CD14-positive monocyte (primary cell): ENCODE measurements at regions of chr9 and their contacts with region 1.

Region 1: DNA sequence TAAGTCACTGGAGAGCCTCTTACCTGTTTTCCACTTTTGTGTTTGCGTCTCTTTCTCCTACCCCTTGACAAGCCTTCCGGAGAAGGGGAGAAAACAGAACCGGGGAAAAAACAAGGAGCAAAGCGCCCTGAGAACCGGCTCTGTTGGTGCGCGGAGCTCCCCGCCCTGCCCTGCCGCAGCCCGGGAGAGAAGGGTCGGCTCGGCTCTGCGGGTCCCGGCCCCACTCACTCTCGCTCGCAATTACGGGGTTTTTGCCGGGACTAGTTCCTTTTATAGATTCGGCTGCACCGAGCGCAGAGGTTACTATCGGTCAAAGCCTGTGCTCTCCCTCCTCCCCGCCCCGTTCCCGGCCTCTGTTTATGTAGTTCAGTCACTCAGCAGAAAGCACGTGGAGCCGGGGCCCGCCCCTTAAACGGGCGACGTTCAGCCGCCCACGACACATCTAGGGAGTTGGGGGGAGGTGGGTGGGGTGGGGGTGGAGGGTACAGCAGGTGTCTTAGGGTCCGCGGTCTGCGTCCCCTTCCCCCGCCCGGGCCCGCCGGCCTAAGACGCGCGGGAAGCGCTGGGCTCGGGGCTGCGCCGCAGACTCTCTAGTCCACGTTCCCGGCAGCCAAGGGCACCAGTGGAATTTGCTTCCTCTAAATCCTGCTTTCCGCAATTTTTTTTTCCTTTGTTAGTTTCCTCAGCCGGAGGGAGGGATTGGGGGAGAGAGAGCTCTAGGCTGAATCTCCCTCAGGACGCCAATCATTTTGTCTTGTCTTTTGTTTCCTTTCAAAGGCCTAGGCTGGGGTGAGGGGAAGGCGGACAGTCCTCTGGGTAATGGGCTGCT is at the start of gene ABCA1:
- DNase-seq: peak; percentile 88 to 95 (median 92)
- H3K4me3 ChIP-seq: peak within 1 kb of the TSS; percentile 66 to 100 (median 77)
- H3K4me3 Mint-ChIP-seq: peak within 1 kb of the TSS; percentile 99 to 100
- H3K27ac ChIP-seq: peak within 1 kb of the TSS; percentile 71 to 85
- H3K27ac Mint-ChIP-seq: peak within 1 kb of the TSS; percentile 88 to 97 (median 94)
- H3K4me1 ChIP-seq: peaks cover 19 to 30% of the 10 kb centered on the region in 2 donors
- H3K4me1 Mint-ChIP-seq: peaks cover 26% of the 10 kb centered on the region
- H3K27me3 ChIP-seq: no peaks in the 10 kb centered on the region
- H3K27me3 Mint-ChIP-seq: peaks cover 2 to 10% (median 4%) of the 10 kb centered on the region in 3 donors
- CTCF ChIP-seq: no peak
- polyA plus RNA-seq, gene ABCA1: 2.0 to 5.1 (median 2.7) TPM

Region 2: GRCh38 chr9:104863180-104863883 is 64.8 kb before region 1 on chr9:
- intact Hi-C with region 1: loop called (anchors 5 kb)
- DNase-seq: peak; percentile 61 to 71 (median 69)
- H3K4me3 ChIP-seq: no peak overlapping the region
- H3K4me3 Mint-ChIP-seq: no peak overlapping the region
- H3K27ac ChIP-seq: peak overlapping the region in 1 of 2 donors; percentile 24
- H3K27ac Mint-ChIP-seq: peak overlapping the region in 6 of 7 donors; percentile 38 to 76 (median 56)
- H3K4me1 ChIP-seq: peaks cover 51 to 74% of the 10 kb centered on the region in 2 donors
- H3K4me1 Mint-ChIP-seq: peaks cover 69% of the 10 kb centered on the region
- H3K27me3 ChIP-seq: no peaks in the 10 kb centered on the region
- H3K27me3 Mint-ChIP-seq: no peaks in the 10 kb centered on the region
- CTCF ChIP-seq: peak; percentile 81

Region 3: GRCh38 chr9:104991144-104991953 is 63.2 kb after region 1 on chr9:
- intact Hi-C with region 1: loop called in 1 of 2 experiments (anchors 2 kb)
- DNase-seq: peak; percentile 86 to 91 (median 89)
- H3K4me3 ChIP-seq: peak overlapping the region; percentile 46 to 81 (median 57)
- H3K4me3 Mint-ChIP-seq: peak overlapping the region; percentile 93 to 96
- H3K27ac ChIP-seq: peak overlapping the region; percentile 97
- H3K27ac Mint-ChIP-seq: peak overlapping the region; percentile 97 to 99 (median 98)
- H3K4me1 ChIP-seq: peaks cover 43 to 51% of the 10 kb centered on the region in 2 donors
- H3K4me1 Mint-ChIP-seq: peaks cover 46% of the 10 kb centered on the region
- H3K27me3 ChIP-seq: no peaks in the 10 kb centered on the region
- H3K27me3 Mint-ChIP-seq: peaks cover 0 to 9% (median 3%) of the 10 kb centered on the region in 3 donors
- CTCF ChIP-seq: no peak

Region 4: DNA sequence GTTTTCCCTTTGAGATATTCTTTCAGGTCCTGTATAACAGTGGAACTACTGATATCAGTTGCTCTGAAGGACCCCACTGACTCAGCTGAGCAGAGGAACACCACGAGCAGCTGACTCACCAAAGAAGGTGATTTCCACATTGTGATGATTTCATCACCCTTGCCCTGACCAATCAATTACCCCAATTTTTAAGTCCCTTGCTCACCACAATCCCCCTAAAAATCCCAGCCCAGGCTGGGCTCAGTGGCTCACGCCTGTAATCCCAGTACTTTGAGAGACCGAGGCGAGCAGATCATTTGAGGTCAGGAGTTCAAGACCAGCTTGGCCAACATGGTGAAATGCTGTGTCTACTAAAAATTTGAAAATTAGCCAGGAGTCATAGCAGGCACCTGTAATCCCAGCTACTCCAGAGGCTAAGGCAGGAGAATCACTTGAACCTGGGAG is 125.1 kb after region 1 on chr9:
- intact Hi-C with region 1: loop called in 1 of 2 experiments (anchors 5 kb)
- DNase-seq: peak; percentile 97 to 99 (median 99)
- H3K4me3 ChIP-seq: no peak overlapping the region
- H3K4me3 Mint-ChIP-seq: peak overlapping the region in 1 of 2 donors; percentile 77
- H3K27ac ChIP-seq: peak overlapping the region; percentile 90 to 99
- H3K27ac Mint-ChIP-seq: peak overlapping the region; percentile 93 to 99 (median 97)
- H3K4me1 ChIP-seq: peaks cover 32 to 34% of the 10 kb centered on the region in 2 donors
- H3K4me1 Mint-ChIP-seq: peaks cover 37% of the 10 kb centered on the region
- H3K27me3 ChIP-seq: no peaks in the 10 kb centered on the region
- H3K27me3 Mint-ChIP-seq: peaks cover 0 to 7% (median 0%) of the 10 kb centered on the region in 3 donors
- CTCF ChIP-seq: no peak

Region 5: GRCh38 chr9:105157130-105157583 is 229.0 kb after region 1 on chr9:
- intact Hi-C with region 1: loop called (anchors 2 to 5 kb)
- DNase-seq: peak; percentile 71 to 89 (median 82)
- H3K4me3 ChIP-seq: no peak overlapping the region
- H3K4me3 Mint-ChIP-seq: no peak overlapping the region
- H3K27ac ChIP-seq: no peak overlapping the region
- H3K27ac Mint-ChIP-seq: peak overlapping the region in 6 of 7 donors; percentile 11 to 83 (median 48)
- H3K4me1 ChIP-seq: peaks cover 18 to 29% of the 10 kb centered on the region in 2 donors
- H3K4me1 Mint-ChIP-seq: peaks cover 21% of the 10 kb centered on the region
- H3K27me3 ChIP-seq: no peaks in the 10 kb centered on the region
- H3K27me3 Mint-ChIP-seq: peaks cover 0 to 2% (median 2%) of the 10 kb centered on the region in 3 donors
- CTCF ChIP-seq: peak; percentile 62

Region 6: GRCh38 chr9:105299190-105299854 is 371.2 kb after region 1 on chr9:
- intact Hi-C with region 1: no loop called
- DNase-seq: peak; percentile 59 to 88 (median 67)
- H3K4me3 ChIP-seq: no peak overlapping the region
- H3K4me3 Mint-ChIP-seq: no peak overlapping the region
- H3K27ac ChIP-seq: peak overlapping the region in 1 of 2 donors; percentile 45
- H3K27ac Mint-ChIP-seq: peak overlapping the region; percentile 31 to 86 (median 74)
- H3K4me1 ChIP-seq: peaks cover 10 to 23% of the 10 kb centered on the region in 2 donors
- H3K4me1 Mint-ChIP-seq: peaks cover 36% of the 10 kb centered on the region
- H3K27me3 ChIP-seq: no peaks in the 10 kb centered on the region
- H3K27me3 Mint-ChIP-seq: no peaks in the 10 kb centered on the region
- CTCF ChIP-seq: no peak

Region 7: GRCh38 chr9:105694190-105694847 is 766.2 kb after region 1 on chr9 and contains the start of gene TMEM38B:
- intact Hi-C with region 1: loop called in 1 of 2 experiments (anchors 10 kb)
- DNase-seq: peak; percentile 65 to 77 (median 77)
- H3K4me3 ChIP-seq: peak within 1 kb of the TSS; percentile 51 to 81 (median 80)
- H3K4me3 Mint-ChIP-seq: peak within 1 kb of the TSS; percentile 90 to 92
- H3K27ac ChIP-seq: peak within 1 kb of the TSS; percentile 69 to 86
- H3K27ac Mint-ChIP-seq: peak within 1 kb of the TSS; percentile 53 to 92 (median 85)
- H3K4me1 ChIP-seq: peaks cover 20 to 31% of the 10 kb centered on the region in 2 donors
- H3K4me1 Mint-ChIP-seq: peaks cover 22% of the 10 kb centered on the region
- H3K27me3 ChIP-seq: peaks cover 3 to 5% of the 10 kb centered on the region in 2 donors
- H3K27me3 Mint-ChIP-seq: peaks cover 8 to 16% (median 9%) of the 10 kb centered on the region in 3 donors
- CTCF ChIP-seq: no peak
- polyA plus RNA-seq, gene TMEM38B: 4.5 to 14.8 (median 12.2) TPM